PC-3 (cell line): ENCODE measurements at regions of chr10 and their contacts with region 1.

Region 1: GRCh38 chr10:52437205-52437646 is 123.1 kb downstream of the DKK1 start:
- DNase-seq: no peak
- ATAC-seq: no peak
- H3K4me3 ChIP-seq: no peak overlapping the region
- H3K27ac ChIP-seq: no peak overlapping the region
- H3K4me1 ChIP-seq: peaks cover 18% of the 10 kb centered on the region
- H3K27me3 ChIP-seq: no peaks in the 10 kb centered on the region
- CTCF ChIP-seq: no peak

Region 2: DNA sequence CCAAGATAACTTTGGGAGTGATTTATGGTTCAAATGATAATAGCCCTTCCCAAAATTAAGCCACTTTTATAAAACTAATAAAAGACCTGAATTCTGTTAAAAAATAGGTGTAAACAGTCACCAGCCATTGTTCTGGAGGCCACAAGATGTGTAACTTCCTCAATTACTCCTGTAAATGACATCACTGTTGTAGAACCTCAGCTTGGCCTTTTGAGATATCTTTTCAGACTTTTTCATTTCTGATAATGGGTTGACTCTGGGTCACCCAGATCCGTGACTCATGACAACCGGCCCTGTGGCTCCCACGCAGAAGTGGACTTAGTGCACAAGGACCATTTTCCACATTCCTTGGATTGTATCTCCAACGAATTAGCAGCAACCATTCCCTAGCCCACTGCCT is 16.6 kb before region 1 on chr10:
- CTCF ChIA-PET with region 1: no interaction called
- POLR2A ChIA-PET with region 1: no interaction called
- intact Hi-C with region 1: loop called (anchors 1 kb)
- DNase-seq: no peak
- ATAC-seq: peak; percentile 34
- H3K4me3 ChIP-seq: no peak overlapping the region
- H3K27ac ChIP-seq: no peak overlapping the region
- H3K4me1 ChIP-seq: peaks cover 10% of the 10 kb centered on the region; the same call in 1 of the 2 replicates
- H3K27me3 ChIP-seq: no peaks in the 10 kb centered on the region
- CTCF ChIP-seq: no peak

Region 3: GRCh38 chr10:52517012-52517411 is 79.8 kb after region 1 on chr10:
- CTCF ChIA-PET with region 1: no interaction called
- POLR2A ChIA-PET with region 1: interaction called, 16 read pairs
- intact Hi-C with region 1: no loop called
- DNase-seq: no peak
- ATAC-seq: no peak; the same call in 1 of the 2 replicates
- H3K4me3 ChIP-seq: no peak overlapping the region
- H3K27ac ChIP-seq: no peak overlapping the region
- H3K4me1 ChIP-seq: peaks cover 9% of the 10 kb centered on the region
- H3K27me3 ChIP-seq: no peaks in the 10 kb centered on the region
- CTCF ChIP-seq: no peak

Region 4: DNA sequence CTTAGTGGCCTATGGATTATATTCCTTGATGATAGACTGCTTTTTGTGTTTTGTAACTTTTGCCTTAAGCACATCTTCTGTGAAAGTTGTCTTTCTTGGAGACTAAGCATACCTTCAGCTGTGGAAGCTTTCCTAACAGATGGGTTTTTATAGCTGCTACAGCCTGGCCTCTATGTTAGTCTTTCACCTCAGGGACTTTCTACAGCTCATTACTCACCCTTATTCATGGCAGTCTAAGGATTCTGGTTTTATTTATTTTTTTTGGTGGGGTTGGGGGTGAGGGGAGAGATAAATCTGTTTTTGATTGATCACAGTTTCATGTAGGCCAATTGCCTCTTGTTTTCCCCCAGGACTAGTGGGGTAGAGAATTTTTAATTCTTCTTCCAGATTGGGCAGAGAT is 96.8 kb after region 1 on chr10:
- CTCF ChIA-PET with region 1: no interaction called
- POLR2A ChIA-PET with region 1: no interaction called
- intact Hi-C with region 1: no loop called
- DNase-seq: peak; percentile 76
- ATAC-seq: peak; percentile 96
- H3K4me3 ChIP-seq: no peak overlapping the region
- H3K27ac ChIP-seq: no peak overlapping the region
- H3K4me1 ChIP-seq: peaks cover 10% of the 10 kb centered on the region
- H3K27me3 ChIP-seq: no peaks in the 10 kb centered on the region
- CTCF ChIP-seq: no peak

Region 5: GRCh38 chr10:52801947-52802346 is 364.7 kb after region 1 on chr10:
- CTCF ChIA-PET with region 1: no interaction called
- POLR2A ChIA-PET with region 1: no interaction called
- intact Hi-C with region 1: no loop called
- DNase-seq: peak; percentile 100
- ATAC-seq: peak; percentile 94
- H3K4me3 ChIP-seq: peak overlapping the region; percentile 19; the same call in 1 of the 2 replicates
- H3K27ac ChIP-seq: peak overlapping the region; percentile 67
- H3K4me1 ChIP-seq: peaks cover 19% of the 10 kb centered on the region
- H3K27me3 ChIP-seq: no peaks in the 10 kb centered on the region
- CTCF ChIP-seq: no peak